Activated naive CD8-positive, alpha-beta T cell treated with anti-CD3 and anti-CD28 coated beads, Interleukin-2, amount 10 ng/mL, durations not matched to agents 7 days and 5 days (primary cell): ENCODE measurements at regions of chr6 and their contacts with region 1.

Region 1: GRCh38 chr6:30556066-30556905 is at the start of gene GNL1:
- DNase-seq: peak; percentile 98
- ATAC-seq: peak; percentile 90
- H3K4me3 Mint-ChIP-seq: peak within 1 kb of the TSS; percentile 95
- H3K27ac Mint-ChIP-seq: peak within 1 kb of the TSS; percentile 100
- H3K4me1 Mint-ChIP-seq: peaks cover 27% of the 10 kb centered on the region
- H3K27me3 Mint-ChIP-seq: no peaks in the 10 kb centered on the region
- total RNA-seq, gene GNL1: 84.3 to 88.6 TPM

Region 2: GRCh38 chr6:30520522-30520921 is 35.8 kb before region 1 on chr6:
- POLR2A ChIA-PET with region 1: no interaction called
- DNase-seq: no peak
- ATAC-seq: no peak
- H3K4me3 Mint-ChIP-seq: no peak overlapping the region
- H3K27ac Mint-ChIP-seq: no peak overlapping the region
- H3K4me1 Mint-ChIP-seq: peaks cover 12% of the 10 kb centered on the region
- H3K27me3 Mint-ChIP-seq: no peaks in the 10 kb centered on the region

Region 3: GRCh38 chr6:30541515-30542403 is 14.5 kb before region 1 on chr6:
- POLR2A ChIA-PET with region 1: interaction called, 10 read pairs
- DNase-seq: peak; percentile 82
- ATAC-seq: peak; percentile 71
- H3K4me3 Mint-ChIP-seq: peak overlapping the region; percentile 74
- H3K27ac Mint-ChIP-seq: peak overlapping the region; percentile 71
- H3K4me1 Mint-ChIP-seq: peaks cover 28% of the 10 kb centered on the region
- H3K27me3 Mint-ChIP-seq: no peaks in the 10 kb centered on the region

Region 4: GRCh38 chr6:30571075-30571768 is 14.9 kb after region 1 on chr6 and contains the start of gene ABCF1:
- POLR2A ChIA-PET with region 1: interaction called, 24 read pairs
- DNase-seq: peak; percentile 100
- ATAC-seq: peak; percentile 91
- H3K4me3 Mint-ChIP-seq: peak within 1 kb of the TSS; percentile 98
- H3K27ac Mint-ChIP-seq: peak within 1 kb of the TSS; percentile 96
- H3K4me1 Mint-ChIP-seq: peaks cover 46% of the 10 kb centered on the region
- H3K27me3 Mint-ChIP-seq: peaks cover 2% of the 10 kb centered on the region
- total RNA-seq, gene ABCF1: 67.5 to 70.4 TPM

Region 5: GRCh38 chr6:30678964-30679726 is 122.9 kb after region 1 on chr6:
- POLR2A ChIA-PET with region 1: no interaction called
- DNase-seq: peak; percentile 98
- ATAC-seq: peak; percentile 42
- H3K4me3 Mint-ChIP-seq: peak overlapping the region; percentile 91
- H3K27ac Mint-ChIP-seq: peak overlapping the region; percentile 99
- H3K4me1 Mint-ChIP-seq: peaks cover 24% of the 10 kb centered on the region
- H3K27me3 Mint-ChIP-seq: no peaks in the 10 kb centered on the region

Region 6: DNA sequence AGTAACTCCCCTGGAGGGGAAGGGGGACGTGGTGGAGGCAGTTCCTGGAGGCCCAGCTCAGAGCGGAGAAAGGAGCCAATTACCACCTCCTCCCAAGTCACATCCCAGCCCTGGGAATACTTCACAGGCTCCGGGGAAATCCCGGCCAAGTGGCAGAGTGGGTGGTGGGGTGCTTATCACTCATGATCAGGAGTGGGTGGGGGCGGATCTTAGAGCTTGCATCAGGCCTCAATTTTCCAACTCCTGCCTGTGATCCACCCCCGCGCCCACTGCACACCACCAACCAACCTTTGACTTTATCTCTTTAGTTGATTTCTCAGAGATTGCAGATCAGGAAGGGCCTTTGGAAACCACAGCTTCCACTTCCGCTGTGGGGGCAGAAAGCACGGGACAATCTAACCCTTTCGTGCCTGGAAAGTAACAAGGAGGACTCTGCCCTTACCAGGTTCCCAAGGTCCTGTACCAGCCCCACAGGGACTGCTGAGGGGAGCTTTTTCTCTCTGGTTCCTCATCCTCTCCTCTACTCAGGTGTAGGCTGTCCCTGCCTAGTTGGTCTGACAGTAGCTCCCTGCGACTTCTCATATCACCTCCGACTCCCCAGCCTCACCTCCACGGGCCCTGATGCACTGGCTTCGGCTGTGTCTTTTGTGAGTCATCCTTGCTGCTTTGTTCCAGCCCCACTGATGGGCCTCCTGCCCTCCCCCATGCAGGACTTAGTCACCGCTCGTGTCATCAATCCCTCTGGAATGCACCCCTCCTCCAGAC is 213.0 kb after region 1 on chr6:
- POLR2A ChIA-PET with region 1: no interaction called
- DNase-seq: peak; percentile 77
- ATAC-seq: peak; percentile 75
- H3K4me3 Mint-ChIP-seq: peak overlapping the region; percentile 75
- H3K27ac Mint-ChIP-seq: peak overlapping the region; percentile 93
- H3K4me1 Mint-ChIP-seq: peaks cover 76% of the 10 kb centered on the region
- H3K27me3 Mint-ChIP-seq: no peaks in the 10 kb centered on the region